ENCODE measurements at regions of chr7 and their contacts with region 1.

Region 1: DNA sequence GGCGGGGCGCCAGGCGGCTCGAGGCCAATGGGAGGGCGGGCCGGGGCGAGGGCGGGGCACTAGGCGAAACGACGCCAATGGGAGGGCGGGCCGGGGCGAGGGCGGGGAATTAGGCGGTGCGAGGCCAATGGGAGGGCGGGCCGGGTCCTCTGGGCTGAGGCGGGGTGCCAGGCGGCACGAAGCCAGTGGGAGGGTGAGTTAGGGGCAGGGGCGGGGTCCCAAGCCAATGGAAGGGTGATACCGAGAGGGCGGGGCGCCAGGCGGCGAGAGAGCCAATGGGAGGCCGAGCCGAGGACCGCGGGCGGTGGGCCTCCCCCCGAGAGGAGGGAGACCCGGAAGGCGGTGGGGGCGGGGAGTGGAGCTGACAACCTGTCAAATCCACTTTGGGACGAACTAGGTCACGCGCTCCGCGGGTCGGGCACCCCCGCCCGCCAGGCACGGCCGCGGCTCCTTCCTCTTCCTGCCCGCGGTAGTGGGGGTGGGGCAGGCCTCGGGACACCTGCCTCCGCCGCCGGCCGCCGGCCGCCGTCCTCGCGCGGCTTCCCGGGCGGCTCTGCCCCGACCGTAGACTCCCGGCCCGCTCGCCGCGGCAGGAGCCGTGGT is 28.0 kb upstream of the KMT2C start:
- DNase-seq: peak; percentile 100
- H3K4me3 Mint-ChIP-seq: peak overlapping the region; percentile 94
- H3K27ac Mint-ChIP-seq: no peak overlapping the region
- H3K4me1 Mint-ChIP-seq: peaks cover 8% of the 10 kb centered on the region
- H3K27me3 Mint-ChIP-seq: no peaks in the 10 kb centered on the region

Region 2: GRCh38 chr7:151631968-151632749 is 831.7 kb before region 1 on chr7:
- intact Hi-C with region 1: loop called (anchors 2 kb)
- DNase-seq: peak; percentile 80
- H3K4me3 Mint-ChIP-seq: peak overlapping the region; percentile 84
- H3K27ac Mint-ChIP-seq: peak overlapping the region; percentile 89
- H3K4me1 Mint-ChIP-seq: peaks cover 16% of the 10 kb centered on the region
- H3K27me3 Mint-ChIP-seq: no peaks in the 10 kb centered on the region

Region 3: GRCh38 chr7:152336754-152337368 is 126.9 kb before region 1 on chr7:
- intact Hi-C with region 1: loop called (anchors 10 kb)
- DNase-seq: no peak
- H3K4me3 Mint-ChIP-seq: no peak overlapping the region
- H3K27ac Mint-ChIP-seq: no peak overlapping the region
- H3K4me1 Mint-ChIP-seq: peaks cover 20% of the 10 kb centered on the region
- H3K27me3 Mint-ChIP-seq: no peaks in the 10 kb centered on the region

Region 4: DNA sequence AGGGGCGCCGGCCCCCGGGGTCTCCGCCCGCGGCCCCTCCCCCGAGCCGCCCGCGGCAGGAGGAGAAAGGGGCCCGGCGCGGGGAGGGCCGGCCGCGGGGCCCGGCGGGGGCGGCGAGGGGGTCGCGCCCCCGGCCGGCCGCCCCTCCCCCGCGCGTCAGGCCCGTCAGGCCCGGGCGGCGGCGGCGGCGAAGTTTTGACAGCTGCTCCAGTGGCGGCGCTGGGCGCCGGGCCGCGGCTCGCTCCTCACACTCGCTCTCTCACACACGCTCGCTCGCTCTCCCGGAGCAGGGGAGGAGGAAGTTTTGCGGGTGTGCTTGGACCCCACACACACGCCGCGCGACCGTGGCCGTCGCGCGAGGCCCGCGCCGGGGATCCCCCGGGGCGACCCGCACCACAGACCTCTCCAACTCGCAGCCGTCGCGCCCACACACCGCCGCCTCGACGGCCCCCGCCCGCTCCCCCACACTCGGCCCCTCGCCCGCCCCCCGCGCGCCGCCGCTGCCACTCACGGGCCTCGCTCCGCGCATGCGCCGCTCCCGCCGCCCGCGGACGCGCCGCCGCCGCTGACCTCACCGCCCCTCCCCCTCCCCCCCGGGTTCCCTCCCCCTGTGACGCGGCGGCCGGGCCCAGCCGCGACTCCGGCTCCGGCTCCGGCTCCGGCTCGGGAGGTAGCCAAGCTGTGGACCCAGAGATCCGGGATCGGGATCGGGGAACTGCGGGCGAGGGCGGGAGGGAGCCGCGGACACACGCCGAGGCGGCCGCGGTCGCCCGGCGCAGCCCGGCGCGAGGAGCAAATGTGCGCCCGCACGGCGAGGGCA is 27.5 kb before region 1 on chr7:
- intact Hi-C with region 1: loop called (anchors 1 kb)
- DNase-seq: peak; percentile 84
- H3K4me3 Mint-ChIP-seq: peak overlapping the region; percentile 69
- H3K27ac Mint-ChIP-seq: peak overlapping the region; percentile 68
- H3K4me1 Mint-ChIP-seq: peaks cover 16% of the 10 kb centered on the region
- H3K27me3 Mint-ChIP-seq: no peaks in the 10 kb centered on the region

Region 5: GRCh38 chr7:152759949-152760853 is 296.4 kb after region 1 on chr7:
- intact Hi-C with region 1: loop called (anchors 10 kb)
- DNase-seq: peak; percentile 9
- H3K4me3 Mint-ChIP-seq: peak overlapping the region; percentile 91
- H3K27ac Mint-ChIP-seq: peak overlapping the region; percentile 84
- H3K4me1 Mint-ChIP-seq: peaks cover 18% of the 10 kb centered on the region
- H3K27me3 Mint-ChIP-seq: no peaks in the 10 kb centered on the region